Activated T-helper 1 cell treated with anti-CD3 and anti-CD28 coated beads, Interleukin-12 subunit alpha, Interleukin-12 subunit beta, Interleukin-2, Interleukin-4 antibody, amounts not matched to agents 30 ng/mL and 10 ng/mL and 1 ng/mL, durations not matched to agents 14 hours and 24 hours and 36 hours (primary cell): ENCODE measurements at regions of chr6 and their contacts with region 1.

Region 1: GRCh38 chr6:97394160-97394748 is 111.2 kb upstream of the MMS22L start:
- DNase-seq: peak; percentile 24
- H3K4me3 Mint-ChIP-seq: no peak overlapping the region
- H3K27ac Mint-ChIP-seq: no peak overlapping the region
- H3K4me1 Mint-ChIP-seq: no peaks in the 10 kb centered on the region
- H3K27me3 Mint-ChIP-seq: peaks cover 13% of the 10 kb centered on the region

Region 2: DNA sequence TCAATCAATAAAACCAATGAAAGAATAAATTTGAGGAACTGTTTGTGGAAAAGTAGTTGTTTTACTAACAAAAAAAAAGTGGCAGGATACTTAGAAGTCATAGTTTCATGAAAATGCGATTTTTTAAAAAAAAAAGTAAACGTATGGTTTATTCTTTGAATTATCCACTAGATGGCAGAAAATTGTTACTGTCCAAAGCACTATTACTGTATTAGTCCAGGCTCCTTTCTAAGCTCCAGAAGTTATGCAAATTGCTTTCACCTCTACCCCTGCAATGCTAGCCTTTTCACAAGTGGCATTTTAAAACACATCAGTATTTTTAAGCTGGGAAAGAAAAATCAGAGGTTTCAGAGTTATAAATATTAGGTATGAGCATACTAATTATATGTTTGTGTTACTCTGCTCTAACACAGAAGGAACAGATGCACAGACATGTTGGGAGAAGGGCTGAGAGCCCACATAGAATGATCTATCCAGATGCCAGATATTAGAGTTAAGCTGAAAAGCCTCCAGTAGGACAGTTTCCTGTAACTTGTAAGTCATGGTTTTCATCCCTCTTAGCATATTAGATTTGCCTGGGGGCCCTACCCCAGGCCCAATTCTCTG is 767.4 kb before region 1 on chr6:
- intact Hi-C with region 1: loop called (anchors 1 kb)
- DNase-seq: no peak
- H3K4me3 Mint-ChIP-seq: no peak overlapping the region
- H3K27ac Mint-ChIP-seq: no peak overlapping the region
- H3K4me1 Mint-ChIP-seq: peaks cover 5% of the 10 kb centered on the region
- H3K27me3 Mint-ChIP-seq: peaks cover 11% of the 10 kb centered on the region

Region 3: DNA sequence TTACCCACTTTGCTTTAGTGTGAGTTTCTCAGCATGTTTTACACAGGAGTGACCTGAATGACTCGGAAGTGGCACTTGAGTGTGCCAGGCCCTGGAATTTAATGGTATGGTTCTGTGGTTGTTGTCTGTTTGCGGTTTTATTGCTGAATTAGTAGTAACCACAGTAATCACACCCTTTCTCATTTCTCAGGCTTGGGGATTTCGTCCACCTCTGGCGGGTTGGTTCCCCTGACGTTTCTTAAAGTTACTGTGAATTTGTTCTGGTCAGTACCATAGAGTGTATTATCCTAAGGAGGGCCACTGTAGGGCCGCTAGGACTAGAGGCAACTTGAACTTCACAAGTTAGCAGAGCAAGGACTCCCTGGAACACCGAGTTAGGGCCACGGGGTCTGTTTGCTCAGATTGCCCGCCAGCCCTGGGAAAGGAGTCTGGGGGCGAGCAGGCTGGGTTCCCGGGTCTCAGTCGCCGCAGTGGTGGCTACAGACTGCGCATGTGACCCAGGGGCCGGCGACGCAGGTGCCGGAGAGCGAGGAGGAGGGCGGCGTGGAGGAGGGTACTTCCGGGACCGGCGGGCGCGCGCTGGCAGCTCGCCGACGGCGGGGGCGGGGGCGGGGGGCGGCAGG is 470.3 kb before region 1 on chr6:
- intact Hi-C with region 1: loop called (anchors 10 kb)
- DNase-seq: no peak
- H3K4me3 Mint-ChIP-seq: peak overlapping the region; percentile 87
- H3K27ac Mint-ChIP-seq: peak overlapping the region; percentile 85
- H3K4me1 Mint-ChIP-seq: peaks cover 33% of the 10 kb centered on the region
- H3K27me3 Mint-ChIP-seq: peaks cover 2% of the 10 kb centered on the region

Region 4: GRCh38 chr6:97068211-97068610 is 326.0 kb before region 1 on chr6:
- intact Hi-C with region 1: loop called (anchors 1 kb)
- DNase-seq: no peak
- H3K4me3 Mint-ChIP-seq: no peak overlapping the region
- H3K27ac Mint-ChIP-seq: no peak overlapping the region
- H3K4me1 Mint-ChIP-seq: peaks cover 9% of the 10 kb centered on the region
- H3K27me3 Mint-ChIP-seq: peaks cover 1% of the 10 kb centered on the region

Region 5: GRCh38 chr6:97186416-97186999 is 207.7 kb before region 1 on chr6:
- intact Hi-C with region 1: loop called (anchors 1 kb)
- DNase-seq: peak; percentile 29
- H3K4me3 Mint-ChIP-seq: no peak overlapping the region
- H3K27ac Mint-ChIP-seq: no peak overlapping the region
- H3K4me1 Mint-ChIP-seq: no peaks in the 10 kb centered on the region
- H3K27me3 Mint-ChIP-seq: no peaks in the 10 kb centered on the region